Naive thymus-derived CD4-positive, alpha-beta T cell (primary cell): ENCODE measurements at regions of chr3 and their contacts with region 1.

Region 1: DNA sequence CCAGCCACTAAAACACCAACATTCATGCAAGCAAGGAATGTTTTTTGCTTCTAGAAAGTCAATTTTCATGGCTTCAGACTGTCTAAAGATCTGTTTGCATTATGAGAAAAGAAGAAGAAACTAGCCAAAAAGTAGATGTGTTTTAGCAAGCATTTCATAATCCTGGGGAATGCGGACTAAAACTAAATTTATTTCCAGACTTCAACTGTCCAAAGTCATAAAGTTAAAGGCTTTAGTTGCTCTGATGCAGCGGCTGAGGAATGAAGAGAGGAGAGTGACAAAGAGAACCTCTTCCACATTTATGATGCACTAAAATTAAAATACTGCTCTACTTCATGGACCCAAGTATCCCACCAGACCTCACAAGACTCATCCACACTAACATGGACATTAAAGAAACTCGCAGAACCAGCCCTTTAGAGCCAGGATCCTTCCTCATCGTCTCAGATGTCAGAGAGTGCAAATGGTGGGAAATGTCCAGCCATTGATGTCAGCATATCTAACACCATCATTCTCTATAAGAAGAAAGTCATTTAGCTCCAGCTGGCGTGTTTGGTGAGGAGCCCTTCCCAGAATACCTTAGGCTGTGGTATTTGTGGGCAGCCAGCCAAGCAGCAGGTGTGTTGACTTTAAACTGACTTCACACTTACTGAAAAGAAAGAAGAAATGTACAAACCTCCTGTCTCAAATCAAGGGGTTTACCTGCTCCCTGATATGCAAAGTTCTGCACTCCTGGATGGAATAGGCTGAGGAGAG is 17.4 kb downstream of the FYCO1 start:
- DNase-seq: peak in 7 of 9 donors; percentile 23 to 57 (median 37)
- ATAC-seq: no peak
- H3K4me3 ChIP-seq: no peak overlapping the region
- H3K4me3 Mint-ChIP-seq: peak overlapping the region; percentile 43 to 87 (median 70)
- H3K27ac ChIP-seq: peak overlapping the region; percentile 32
- H3K27ac Mint-ChIP-seq: peak overlapping the region; percentile 68 to 94 (median 85)
- H3K4me1 ChIP-seq: peaks cover 36 to 92% of the 10 kb centered on the region in 2 donors
- H3K4me1 Mint-ChIP-seq: peaks cover 30 to 86% (median 53%) of the 10 kb centered on the region in 7 donors
- H3K27me3 ChIP-seq: no peaks in the 10 kb centered on the region
- H3K27me3 Mint-ChIP-seq: no peaks in the 10 kb centered on the region

Region 2: GRCh38 chr3:45962033-45962432 is 16.2 kb before region 1 on chr3:
- CTCF ChIA-PET with region 1: interaction called, 4 read pairs
- POLR2A ChIA-PET with region 1: interaction called, 6 read pairs
- intact Hi-C with region 1: loop called in 1 of 2 experiments (anchors 2 kb)
- DNase-seq: no peak
- ATAC-seq: no peak
- H3K4me3 ChIP-seq: no peak overlapping the region
- H3K4me3 Mint-ChIP-seq: peak overlapping the region in 1 of 10 donors; percentile 31
- H3K27ac ChIP-seq: no peak overlapping the region
- H3K27ac Mint-ChIP-seq: peak overlapping the region in 1 of 9 donors; percentile 64
- H3K4me1 ChIP-seq: peaks cover 9 to 82% of the 10 kb centered on the region in 2 donors
- H3K4me1 Mint-ChIP-seq: peaks cover 6 to 75% (median 18%) of the 10 kb centered on the region in 7 donors
- H3K27me3 ChIP-seq: no peaks in the 10 kb centered on the region
- H3K27me3 Mint-ChIP-seq: no peaks in the 10 kb centered on the region

Region 3: GRCh38 chr3:46070595-46071093 is 92.5 kb after region 1 on chr3:
- CTCF ChIA-PET with region 1: interaction called, 8 read pairs
- POLR2A ChIA-PET with region 1: interaction called, 8 read pairs
- intact Hi-C with region 1: loop called in 1 of 2 experiments (anchors 2 kb)
- DNase-seq: peak in 7 of 9 donors; percentile 32 to 72 (median 52)
- ATAC-seq: peak; percentile 65
- H3K4me3 ChIP-seq: no peak overlapping the region
- H3K4me3 Mint-ChIP-seq: peak overlapping the region in 9 of 10 donors; percentile 3 to 57 (median 35)
- H3K27ac ChIP-seq: no peak overlapping the region
- H3K27ac Mint-ChIP-seq: peak overlapping the region in 8 of 9 donors; percentile 0 to 75 (median 32)
- H3K4me1 ChIP-seq: peaks cover 39 to 62% of the 10 kb centered on the region in 2 donors
- H3K4me1 Mint-ChIP-seq: peaks cover 45 to 66% (median 61%) of the 10 kb centered on the region in 7 donors
- H3K27me3 ChIP-seq: no peaks in the 10 kb centered on the region
- H3K27me3 Mint-ChIP-seq: peaks cover 0 to 60% (median 0%) of the 10 kb centered on the region in 5 donors

Region 4: DNA sequence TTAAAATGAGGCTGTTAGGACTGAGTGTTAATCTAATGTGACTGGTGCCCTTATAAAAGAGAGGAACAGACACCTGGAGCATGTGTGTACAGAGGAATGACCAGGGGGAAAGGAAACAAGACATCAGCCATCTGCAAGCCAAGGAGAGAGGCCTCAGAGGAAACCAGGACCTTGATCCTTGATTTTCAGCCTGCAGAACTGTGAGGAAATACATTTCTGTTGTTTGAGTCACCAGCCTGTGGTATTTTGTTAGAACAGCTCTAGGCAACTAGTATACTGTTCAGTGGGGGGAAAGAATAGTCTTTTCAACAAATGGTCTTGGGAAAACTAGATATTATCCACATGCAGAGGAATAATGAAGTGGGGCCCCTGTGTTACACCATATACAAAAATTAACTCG is 149.3 kb after region 1 on chr3:
- CTCF ChIA-PET with region 1: no interaction called
- POLR2A ChIA-PET with region 1: no interaction called
- intact Hi-C with region 1: no loop called
- DNase-seq: no peak
- ATAC-seq: no peak
- H3K4me3 ChIP-seq: no peak overlapping the region
- H3K4me3 Mint-ChIP-seq: no peak overlapping the region
- H3K27ac ChIP-seq: no peak overlapping the region
- H3K27ac Mint-ChIP-seq: peak overlapping the region in 1 of 9 donors; percentile 10
- H3K4me1 ChIP-seq: peaks cover 8 to 11% of the 10 kb centered on the region in 2 donors
- H3K4me1 Mint-ChIP-seq: peaks cover 15 to 49% (median 20%) of the 10 kb centered on the region in 7 donors
- H3K27me3 ChIP-seq: no peaks in the 10 kb centered on the region
- H3K27me3 Mint-ChIP-seq: peaks cover 0 to 41% (median 7%) of the 10 kb centered on the region in 5 donors